Head of caudate nucleus (tissue), 42 donors: ENCODE measurements at regions of chr17 and their contacts with region 1.

Region 1: GRCh38 chr17:47970704-47971463 is at the start of gene CDK5RAP3:
- DNase-seq: peak; percentile 99 to 100 (median 100)

Region 2: DNA sequence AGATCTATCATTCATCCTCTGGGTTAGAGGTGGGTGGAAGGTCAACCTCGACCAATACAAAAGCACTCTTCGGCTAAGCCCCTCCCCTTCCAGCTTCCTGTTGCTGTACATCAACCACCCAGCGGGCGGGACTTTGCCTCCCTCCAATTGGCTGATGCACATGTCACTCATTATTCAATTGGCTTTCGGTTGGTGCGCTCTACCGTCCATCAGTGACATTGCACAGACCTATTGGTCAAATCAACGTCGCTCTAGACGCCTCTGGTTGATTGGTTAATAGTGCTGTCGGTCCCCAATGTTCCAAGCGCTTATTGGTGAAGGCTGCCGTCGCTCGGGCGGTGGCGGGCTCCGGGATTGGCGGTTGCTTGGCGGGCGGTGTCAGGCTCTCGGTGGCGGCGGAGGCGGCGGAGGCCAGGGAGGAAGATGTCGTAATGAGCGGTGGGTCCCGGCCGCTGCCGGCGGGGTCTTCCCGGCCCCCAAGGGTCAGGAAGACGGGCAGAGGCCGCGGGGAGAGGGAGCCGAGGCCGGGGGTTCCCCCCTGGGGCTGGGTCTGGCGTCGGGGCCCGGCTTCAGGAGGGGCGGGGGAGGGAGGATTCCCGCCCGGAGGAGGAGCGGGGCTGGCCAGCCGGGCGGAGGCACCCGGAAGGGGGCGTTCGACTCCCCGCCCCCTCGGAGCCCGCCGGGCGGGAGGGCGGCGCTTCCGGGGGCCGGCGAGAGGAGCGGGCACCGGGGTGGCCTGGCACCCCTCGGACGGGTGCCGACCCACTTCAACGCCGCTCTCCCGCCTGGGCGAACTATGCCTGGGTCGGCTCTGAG is 74.8 kb before region 1 on chr17 and contains the start of gene SP2:
- intact Hi-C with region 1: loop called (anchors 2 kb)
- DNase-seq: peak; percentile 95 to 100 (median 99)